GM12878 (cell line): ENCODE measurements at regions of chr5 and their contacts with region 1.

Region 1: DNA sequence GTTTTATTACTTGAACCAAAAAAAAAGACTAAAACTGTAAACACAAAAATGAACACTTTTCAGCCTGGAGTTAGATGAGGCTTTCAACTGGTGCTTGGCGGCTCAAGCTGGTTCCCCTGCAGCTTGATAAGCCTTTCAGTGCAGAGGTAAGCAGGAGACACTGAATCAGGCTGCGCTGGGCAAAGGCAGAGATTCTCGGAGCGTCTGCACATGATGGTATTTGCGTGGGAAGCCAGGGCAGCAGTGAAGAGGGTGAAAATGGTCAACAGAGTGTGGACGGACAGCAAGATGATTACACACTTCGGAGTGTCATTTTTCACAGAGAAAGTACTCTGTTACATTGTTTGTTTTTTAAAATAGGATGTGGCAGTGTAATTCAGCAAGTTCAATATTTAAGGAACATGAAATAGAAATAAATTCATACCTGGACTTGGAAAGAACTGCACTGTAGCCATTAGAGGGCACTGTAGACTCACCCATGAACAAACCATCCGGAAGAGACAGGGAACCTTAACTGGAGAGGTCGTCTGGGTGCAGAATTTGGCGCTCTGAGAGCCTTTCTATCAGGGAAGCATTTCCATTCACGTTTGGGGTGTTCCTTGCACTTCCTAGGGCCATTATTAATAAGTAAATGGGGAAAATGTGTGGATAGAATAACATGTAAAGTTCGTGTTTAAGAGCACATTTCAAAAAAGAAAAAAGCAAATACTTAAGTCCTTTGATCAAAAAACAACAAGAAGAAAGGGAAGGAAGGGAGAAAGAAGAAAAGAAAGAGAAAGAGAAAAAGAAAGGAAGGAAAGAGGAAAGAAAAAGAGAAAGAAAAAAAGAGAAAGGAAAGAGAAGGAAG is 69.8 kb downstream of the ICE1 start:
- DNase-seq: peak; percentile 25
- ATAC-seq: peak; percentile 65
- H3K4me3 ChIP-seq: no peak overlapping the region
- H3K27ac ChIP-seq: no peak overlapping the region
- H3K4me1 ChIP-seq: no peaks in the 10 kb centered on the region
- H3K27me3 ChIP-seq: no peaks in the 10 kb centered on the region
- CTCF ChIP-seq: peak; percentile 67 to 78 (median 78)
- EP300 ChIP-seq: no peak
- POLR2A ChIP-seq: no peak
- RAD21 ChIP-seq: peak; percentile 91

Region 2: GRCh38 chr5:5026407-5026780 is 465.9 kb before region 1 on chr5:
- CTCF ChIA-PET with region 1: no interaction called
- POLR2A ChIA-PET with region 1: no interaction called
- RAD21 ChIA-PET with region 1: no interaction called
- SMC1A ChIA-PET with region 1: no interaction called
- in situ Hi-C with region 1: no loop called
- intact Hi-C with region 1: no loop called
- DNase-seq: no peak
- ATAC-seq: no peak; the same call in 2 of the 3 replicates
- H3K4me3 ChIP-seq: no peak overlapping the region
- H3K27ac ChIP-seq: no peak overlapping the region
- H3K4me1 ChIP-seq: no peaks in the 10 kb centered on the region
- H3K27me3 ChIP-seq: no peaks in the 10 kb centered on the region
- CTCF ChIP-seq: no peak
- EP300 ChIP-seq: no peak
- POLR2A ChIP-seq: no peak
- RAD21 ChIP-seq: no peak

Region 3: DNA sequence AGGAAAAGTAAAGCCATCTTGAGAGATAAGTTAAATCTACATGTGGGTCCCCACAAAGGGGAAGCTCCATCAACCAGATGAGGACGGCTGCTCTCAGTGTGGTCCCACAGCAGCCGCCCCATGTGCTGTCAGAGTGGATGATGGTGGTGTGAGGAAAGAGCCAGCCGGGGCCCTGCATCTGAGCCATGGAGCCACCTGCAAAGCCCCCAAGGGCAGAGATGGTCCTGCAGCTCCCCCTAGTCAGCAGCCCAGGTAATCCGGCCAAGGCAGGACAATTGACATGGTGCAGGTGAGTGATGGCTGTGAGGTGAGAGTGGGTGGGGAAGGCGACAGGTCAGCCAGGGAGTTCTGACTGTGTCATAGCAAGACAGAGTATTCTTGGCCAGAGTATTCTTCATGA is 389.0 kb after region 1 on chr5:
- CTCF ChIA-PET with region 1: interaction called, 27 read pairs
- POLR2A ChIA-PET with region 1: no interaction called
- RAD21 ChIA-PET with region 1: interaction called, 4 read pairs
- SMC1A ChIA-PET with region 1: interaction called, 19 read pairs
- in situ Hi-C with region 1: loop called (anchors 5 kb)
- intact Hi-C with region 1: loop called (anchors 1 kb)
- DNase-seq: no peak
- ATAC-seq: peak; percentile 75
- H3K4me3 ChIP-seq: no peak overlapping the region
- H3K27ac ChIP-seq: no peak overlapping the region
- H3K4me1 ChIP-seq: no peaks in the 10 kb centered on the region
- H3K27me3 ChIP-seq: no peaks in the 10 kb centered on the region
- CTCF ChIP-seq: peak; percentile 34 to 50 (median 40); a peak in 3 of 6 replicates
- EP300 ChIP-seq: no peak
- POLR2A ChIP-seq: no peak
- RAD21 ChIP-seq: peak; percentile 71

Region 4: GRCh38 chr5:6279607-6280006 is 787.3 kb after region 1 on chr5:
- CTCF ChIA-PET with region 1: no interaction called
- POLR2A ChIA-PET with region 1: no interaction called
- RAD21 ChIA-PET with region 1: no interaction called
- SMC1A ChIA-PET with region 1: no interaction called
- in situ Hi-C with region 1: no loop called
- intact Hi-C with region 1: loop called (anchors 10 kb)
- DNase-seq: no peak
- ATAC-seq: no peak
- H3K4me3 ChIP-seq: no peak overlapping the region
- H3K27ac ChIP-seq: no peak overlapping the region
- H3K4me1 ChIP-seq: peaks cover 5% of the 10 kb centered on the region
- H3K27me3 ChIP-seq: no peaks in the 10 kb centered on the region
- CTCF ChIP-seq: no peak
- EP300 ChIP-seq: no peak
- POLR2A ChIP-seq: no peak
- RAD21 ChIP-seq: no peak

Region 5: DNA sequence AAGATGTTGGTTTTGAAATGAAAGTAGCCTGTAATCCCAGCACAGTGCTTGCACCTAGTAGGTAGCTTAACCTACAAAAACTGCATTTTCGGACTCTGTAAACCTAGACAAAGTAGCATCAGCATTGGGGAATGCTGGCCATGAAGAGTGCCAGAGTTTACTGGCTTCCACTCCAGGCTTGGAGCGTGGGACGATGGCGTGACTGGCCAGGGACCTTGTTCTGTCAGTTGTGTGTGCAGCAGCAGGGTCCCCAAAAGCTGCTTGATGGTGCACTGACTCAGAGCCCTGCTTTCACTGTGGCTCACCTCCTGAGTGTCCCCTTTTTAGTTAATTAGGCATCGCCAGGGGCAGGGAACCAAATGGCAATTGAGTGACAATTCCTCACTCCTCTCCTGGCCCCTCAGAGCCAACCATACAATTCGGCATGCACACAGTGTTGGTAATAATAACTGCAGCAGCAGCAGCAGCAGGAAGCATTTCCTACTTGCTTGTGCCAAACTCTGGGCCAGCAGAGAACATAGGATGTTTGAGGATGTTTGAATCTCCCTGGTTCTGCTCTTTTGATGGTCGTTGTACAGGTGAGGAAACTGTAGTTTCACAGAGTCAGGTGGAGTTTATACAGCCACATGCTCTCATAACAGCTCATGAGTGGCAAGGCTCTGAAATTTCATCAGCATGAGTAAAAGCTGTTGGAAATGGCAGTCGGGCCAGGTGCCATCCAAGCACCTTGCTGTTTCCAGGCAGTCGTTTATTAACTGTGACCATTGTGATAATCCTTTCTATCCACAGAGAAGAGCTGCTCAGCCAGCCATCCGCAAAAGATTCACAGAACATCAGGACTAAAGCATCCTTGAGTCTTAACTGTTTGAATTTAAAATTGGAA is 960.6 kb after region 1 on chr5:
- CTCF ChIA-PET with region 1: interaction called, 4 read pairs
- POLR2A ChIA-PET with region 1: no interaction called
- RAD21 ChIA-PET with region 1: no interaction called
- SMC1A ChIA-PET with region 1: no interaction called
- in situ Hi-C with region 1: no loop called
- intact Hi-C with region 1: loop called (anchors 10 kb)
- DNase-seq: no peak
- ATAC-seq: no peak
- H3K4me3 ChIP-seq: no peak overlapping the region
- H3K27ac ChIP-seq: no peak overlapping the region
- H3K4me1 ChIP-seq: no peaks in the 10 kb centered on the region
- H3K27me3 ChIP-seq: peaks cover 4 to 25% of the 10 kb centered on the region in 2 experiments
- CTCF ChIP-seq: no peak
- EP300 ChIP-seq: no peak
- POLR2A ChIP-seq: no peak
- RAD21 ChIP-seq: no peak

Region 6: GRCh38 chr5:6576861-6577501 is 1084.7 kb after region 1 on chr5:
- CTCF ChIA-PET with region 1: interaction called, 9 read pairs
- POLR2A ChIA-PET with region 1: no interaction called
- RAD21 ChIA-PET with region 1: interaction called, 3 read pairs
- SMC1A ChIA-PET with region 1: interaction called, 7 read pairs
- in situ Hi-C with region 1: loop called (anchors 25 kb)
- intact Hi-C with region 1: loop called (anchors 2 kb)
- DNase-seq: peak; percentile 4
- ATAC-seq: peak; percentile 70
- H3K4me3 ChIP-seq: no peak overlapping the region
- H3K27ac ChIP-seq: no peak overlapping the region
- H3K4me1 ChIP-seq: no peaks in the 10 kb centered on the region
- H3K27me3 ChIP-seq: peaks cover 0 to 3% of the 10 kb centered on the region in 2 experiments; a peak in 3 of 4 replicates
- CTCF ChIP-seq: peak; percentile 49 to 70 (median 53); a peak in 5 of 6 replicates
- EP300 ChIP-seq: no peak
- POLR2A ChIP-seq: no peak
- RAD21 ChIP-seq: peak; percentile 77